Heart left ventricle (tissue), 16 donors: ENCODE measurements at regions of chr11 and their contacts with region 1.

Region 1: DNA sequence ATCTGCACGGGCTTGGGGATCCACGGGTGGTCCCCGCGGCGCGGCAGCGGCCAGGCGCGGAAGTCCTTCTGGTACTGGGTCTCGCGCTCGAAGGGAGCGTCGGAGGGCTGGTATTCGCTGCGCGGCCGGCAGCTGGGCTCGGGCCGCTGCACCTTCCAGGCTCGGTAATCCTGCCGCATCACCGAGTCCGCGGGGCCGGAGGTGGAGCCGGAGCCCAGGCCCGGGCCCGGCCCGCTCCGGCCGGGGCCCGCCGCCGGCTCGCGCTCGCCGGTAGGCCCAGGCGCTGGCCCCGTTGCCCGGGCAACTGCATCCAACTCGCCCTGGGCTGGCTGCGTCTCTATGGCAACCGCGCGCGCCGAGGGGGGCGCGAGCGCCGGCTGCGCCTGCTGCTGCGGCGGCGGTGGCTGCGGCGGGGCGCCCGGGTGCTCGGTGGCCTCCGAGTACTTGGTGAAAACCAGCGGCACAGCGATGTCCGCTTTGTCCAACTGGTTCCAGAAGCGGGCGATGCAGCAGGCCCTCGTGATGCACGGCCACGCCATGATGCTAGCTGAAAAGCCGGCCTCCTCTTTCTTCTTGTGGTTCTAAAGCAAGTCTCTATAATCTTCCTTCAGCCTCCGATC is 897 bp downstream of the MAP6 start:
- DNase-seq: peak; percentile 53 to 77 (median 61)
- ATAC-seq: peak in 3 of 4 donors; percentile 30 to 70 (median 66)
- H3K4me3 ChIP-seq: peak overlapping the region; percentile 41 to 82 (median 65)
- H3K27ac ChIP-seq: peak overlapping the region in 9 of 12 donors; percentile 19 to 76 (median 55)
- H3K4me1 ChIP-seq: peaks cover 3 to 24% (median 12%) of the 10 kb centered on the region in 12 donors
- H3K27me3 ChIP-seq: peaks cover 0 to 65% (median 3%) of the 10 kb centered on the region in 9 donors
- CTCF ChIP-seq: no peak
- POLR2A ChIP-seq: no peak

Region 2: GRCh38 chr11:74948898-74949747 is 718.8 kb before region 1 on chr11 and contains the starts of genes SPCS2 and XRRA1:
- intact Hi-C with region 1: no loop called
- DNase-seq: peak; percentile 99 to 100 (median 99)
- ATAC-seq: peak; percentile 99 to 100 (median 99)
- H3K4me3 ChIP-seq: peak within 1 kb of the TSS; percentile 72 to 96 (median 84)
- H3K27ac ChIP-seq: peak within 1 kb of the TSS; percentile 5 to 91 (median 88)
- H3K4me1 ChIP-seq: peaks cover 0 to 56% (median 34%) of the 10 kb centered on the region in 12 donors
- H3K27me3 ChIP-seq: no peaks in the 10 kb centered on the region
- CTCF ChIP-seq: no peak
- POLR2A ChIP-seq: peak; percentile 61 to 78
- total RNA-seq, gene SPCS2: 21.8 to 136 (median 109) TPM
- total RNA-seq, gene XRRA1: 5.3 to 26.6 (median 13.4) TPM

Region 3: DNA sequence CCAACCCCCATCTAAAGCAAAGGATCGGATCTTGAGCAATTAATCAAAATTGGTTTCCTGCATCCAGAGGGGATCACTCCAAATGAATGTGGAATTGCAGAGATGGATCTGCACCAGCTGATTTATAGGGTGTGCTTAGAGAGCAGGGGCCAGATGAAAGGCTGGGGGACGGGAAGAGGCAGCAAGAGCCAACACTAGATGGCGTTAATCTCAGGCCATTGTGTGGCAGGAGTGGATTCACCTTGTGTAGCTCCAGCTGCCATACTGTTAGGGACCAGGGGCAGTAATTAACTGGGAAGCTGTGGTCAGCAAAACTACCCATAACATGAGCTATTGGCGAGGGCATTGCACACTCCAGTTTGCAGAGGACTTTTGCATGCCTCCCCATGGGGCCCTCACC is 70.3 kb before region 1 on chr11:
- intact Hi-C with region 1: loop called in 1 of 10 experiments (anchors 5 kb)
- DNase-seq: no peak
- ATAC-seq: peak in 1 of 4 donors; percentile 29
- H3K4me3 ChIP-seq: no peak overlapping the region
- H3K27ac ChIP-seq: no peak overlapping the region
- H3K4me1 ChIP-seq: peaks cover 0 to 3% (median 0%) of the 10 kb centered on the region in 12 donors
- H3K27me3 ChIP-seq: no peaks in the 10 kb centered on the region
- CTCF ChIP-seq: peak in 9 of 12 donors; percentile 7 to 45 (median 28)
- POLR2A ChIP-seq: no peak